H1 (cell line): ENCODE measurements at regions of chr20 and their contacts with region 1.

Region 1: DNA sequence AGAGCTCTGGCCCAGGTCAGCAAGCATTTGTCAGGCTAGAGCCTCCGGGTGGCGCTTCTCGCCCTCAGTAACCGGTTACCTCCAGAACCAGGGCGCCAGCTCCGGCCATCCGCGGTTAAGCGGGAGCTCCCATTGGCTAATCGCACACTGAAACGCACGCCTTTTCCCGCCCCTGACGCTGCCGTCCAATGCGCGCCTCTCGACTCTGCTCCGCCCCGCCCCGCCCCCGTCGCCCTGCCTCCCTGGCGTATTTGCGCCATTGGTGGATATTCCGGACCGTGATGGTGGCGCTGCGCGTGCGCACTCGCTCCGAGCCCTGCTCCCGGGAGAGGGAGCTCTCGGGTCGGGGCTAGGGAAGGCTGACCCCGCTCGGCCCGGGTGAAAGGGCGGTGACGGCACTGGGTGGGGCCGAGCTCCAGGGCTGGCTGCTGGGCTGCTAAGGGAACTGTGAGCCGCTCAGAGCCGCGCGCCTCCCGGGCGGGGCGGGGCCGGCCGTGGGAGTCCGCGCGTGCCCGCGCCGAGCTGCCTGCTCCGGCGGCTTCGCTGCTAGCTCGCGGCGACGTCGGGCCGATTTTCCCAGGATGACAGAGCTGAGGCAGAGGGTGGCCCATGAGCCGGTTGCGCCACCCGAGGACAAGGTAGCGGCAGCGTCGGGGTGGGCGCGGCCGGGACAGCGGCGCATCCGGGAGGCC is at the start of gene CDS2:
- DNase-seq: peak; percentile 98 to 100
- H3K4me3 ChIP-seq: peak within 1 kb of the TSS; percentile 74 to 86 (median 83)
- H3K27ac ChIP-seq: peak within 1 kb of the TSS; percentile 72
- H3K4me1 ChIP-seq: peaks cover 0 to 7% (median 2%) of the 10 kb centered on the region in 4 experiments; a peak in 2 of 7 replicates
- H3K27me3 ChIP-seq: no peaks in the 10 kb centered on the region
- CTCF ChIP-seq: peak; percentile 52 to 74 (median 60)
- EP300 ChIP-seq: no peak
- POLR2A ChIP-seq: peak in 1 of 2 experiments; percentile 75; a peak in 1 of 3 replicates
- RAD21 ChIP-seq: peak; percentile 48 to 58
- total RNA-seq, gene CDS2: 56.2 and 57.0 TPM in 2 replicates

Region 2: GRCh38 chr20:5146871-5147592 is 20.4 kb after region 1 on chr20:
- CTCF ChIA-PET with region 1: interaction called, 13 read pairs
- POLR2A ChIA-PET with region 1: no interaction called
- DNase-seq: no peak
- H3K4me3 ChIP-seq: no peak overlapping the region
- H3K27ac ChIP-seq: no peak overlapping the region
- H3K4me1 ChIP-seq: peaks cover 0 to 2% (median 0%) of the 10 kb centered on the region in 4 experiments; a peak in 2 of 7 replicates
- H3K27me3 ChIP-seq: no peaks in the 10 kb centered on the region
- CTCF ChIP-seq: no peak
- EP300 ChIP-seq: no peak
- POLR2A ChIP-seq: no peak
- RAD21 ChIP-seq: no peak

Region 3: DNA sequence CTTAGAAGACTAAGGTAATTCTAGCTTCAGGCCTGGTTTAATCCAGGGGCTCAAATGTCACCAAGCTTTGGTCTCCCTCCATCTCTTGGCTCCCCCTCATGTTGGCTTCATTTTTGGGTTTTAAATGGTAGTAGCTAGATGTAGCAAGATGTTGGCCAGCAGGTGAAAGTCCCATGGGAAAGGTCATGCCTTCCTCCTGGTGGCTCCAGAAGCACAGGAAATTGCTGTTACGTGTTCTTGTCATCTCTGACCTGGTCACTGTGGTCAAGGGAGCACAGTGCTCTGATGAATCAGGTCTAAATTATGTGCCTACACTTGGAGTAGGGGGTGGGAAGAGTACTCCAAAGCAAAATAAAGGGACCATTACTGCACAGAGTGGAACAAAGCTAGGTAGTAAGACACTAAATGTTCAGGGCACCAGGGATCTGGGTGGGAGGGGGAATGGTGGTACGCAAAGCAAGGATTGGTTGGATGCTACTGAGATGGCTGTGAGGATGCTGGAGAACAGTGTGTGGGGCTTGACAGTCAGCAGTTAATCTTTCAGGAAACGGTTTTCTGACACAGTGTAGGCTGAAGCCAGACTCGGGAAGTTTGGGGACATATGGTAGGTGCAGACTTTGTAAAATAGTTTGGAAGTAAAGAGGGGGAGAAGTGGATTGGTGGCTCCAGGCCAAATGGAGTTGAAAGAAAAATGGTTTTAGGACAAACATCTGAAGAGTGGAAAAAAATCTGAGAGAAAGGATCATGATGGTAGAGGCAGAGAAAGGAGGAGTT is 30.2 kb after region 1 on chr20:
- CTCF ChIA-PET with region 1: interaction called, 16 read pairs
- POLR2A ChIA-PET with region 1: no interaction called
- DNase-seq: no peak
- H3K4me3 ChIP-seq: no peak overlapping the region
- H3K27ac ChIP-seq: no peak overlapping the region
- H3K4me1 ChIP-seq: no peaks in the 10 kb centered on the region
- H3K27me3 ChIP-seq: no peaks in the 10 kb centered on the region
- CTCF ChIP-seq: no peak
- EP300 ChIP-seq: no peak
- POLR2A ChIP-seq: no peak
- RAD21 ChIP-seq: no peak

Region 4: DNA sequence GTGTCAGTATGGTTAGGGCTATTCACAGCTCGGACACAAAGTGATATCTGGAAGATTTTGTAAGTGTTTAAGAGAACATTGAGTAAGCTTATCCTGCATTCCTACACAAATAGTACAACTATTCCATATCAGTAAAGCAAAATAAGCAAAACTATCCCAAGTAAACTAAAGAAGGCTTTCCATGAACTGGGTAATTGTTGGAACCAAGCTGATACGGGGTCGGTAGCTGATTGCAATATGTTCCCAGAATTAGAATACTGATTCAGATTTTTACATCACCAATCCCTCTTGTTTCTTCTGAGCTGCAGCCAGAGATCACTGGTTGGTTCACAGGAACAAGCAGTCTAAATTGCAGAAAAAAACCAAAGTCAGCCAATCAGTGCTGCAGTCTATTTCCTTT is 54.3 kb after region 1 on chr20:
- CTCF ChIA-PET with region 1: interaction called, 18 read pairs
- POLR2A ChIA-PET with region 1: interaction called, 5 read pairs
- DNase-seq: no peak
- H3K4me3 ChIP-seq: no peak overlapping the region
- H3K27ac ChIP-seq: no peak overlapping the region
- H3K4me1 ChIP-seq: peaks cover 4 to 16% (median 10%) of the 10 kb centered on the region in 4 experiments; a peak in 5 of 7 replicates
- H3K27me3 ChIP-seq: no peaks in the 10 kb centered on the region
- CTCF ChIP-seq: no peak
- EP300 ChIP-seq: no peak
- POLR2A ChIP-seq: no peak
- RAD21 ChIP-seq: no peak